A549 (cell line): ENCODE measurements at regions of chr11 and their contacts with region 1.

Region 1: DNA sequence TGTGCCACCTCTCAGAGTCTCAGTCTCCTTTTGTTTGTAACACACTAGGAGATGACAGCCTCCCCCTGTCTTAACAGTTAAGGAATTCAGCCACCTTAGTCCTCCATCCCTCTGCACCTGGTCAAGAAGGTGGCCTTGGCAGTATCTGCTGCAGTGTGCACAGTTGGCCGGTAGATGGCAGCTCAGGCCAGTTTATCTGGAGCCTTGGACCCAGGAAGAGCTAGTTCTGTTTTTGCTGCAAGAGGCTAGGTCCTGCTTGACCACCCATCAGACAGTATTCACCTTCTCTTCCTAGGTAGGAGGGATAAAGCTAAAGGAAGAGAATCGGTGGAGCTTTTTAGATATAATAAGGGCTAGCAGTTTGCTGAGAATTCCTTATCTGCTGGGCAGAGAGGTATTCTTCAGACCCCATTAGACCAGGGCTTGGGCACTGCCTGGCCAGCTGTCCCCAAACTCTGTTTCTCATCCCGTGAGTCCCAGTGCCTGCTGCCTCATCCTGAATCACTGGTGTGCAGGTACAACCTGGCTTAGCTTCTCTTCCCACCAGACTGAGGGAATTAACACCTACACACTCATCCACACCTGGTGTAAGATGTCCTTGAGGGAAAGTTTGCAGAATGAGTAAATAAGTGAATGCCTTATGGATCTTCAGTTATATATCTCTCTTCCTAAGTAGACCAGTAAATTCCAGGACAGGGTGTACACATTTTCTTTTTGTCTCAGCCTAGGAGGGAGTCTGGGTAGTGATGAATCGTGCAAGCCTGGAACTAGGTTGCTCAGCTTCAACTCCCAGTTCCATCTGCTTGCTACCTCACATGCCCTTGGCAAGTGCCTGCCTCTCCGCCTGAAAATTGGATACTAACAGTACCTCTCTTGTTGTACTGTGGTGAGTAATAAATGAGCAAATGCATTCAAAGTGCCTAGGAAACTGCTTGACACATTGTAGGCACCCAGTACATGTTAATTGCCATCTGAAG is 70.8 kb upstream of the NARS2 start:
- DNase-seq: peak; percentile 58 to 68
- ATAC-seq: peak; percentile 81 to 92
- H3K4me3 ChIP-seq: no peak overlapping the region
- H3K27ac ChIP-seq: no peak overlapping the region
- H3K4me1 ChIP-seq: 0 out of 3 replicates have a peak, but pooled peaks cover 3% of the 10 kb centered on the region
- CTCF ChIP-seq: peak; percentile 89
- EP300 ChIP-seq: no peak
- POLR2A ChIP-seq: no peak
- RAD21 ChIP-seq: peak; percentile 91

Region 2: GRCh38 chr11:78659326-78660270 is 14.1 kb after region 1 on chr11:
- CTCF ChIA-PET with region 1: interaction called, 35 read pairs
- POLR2A ChIA-PET with region 1: no interaction called
- DNase-seq: no peak
- ATAC-seq: no peak; a peak in 1 of 6 replicates
- H3K4me3 ChIP-seq: no peak overlapping the region
- H3K27ac ChIP-seq: no peak overlapping the region
- H3K4me1 ChIP-seq: no peaks in the 10 kb centered on the region
- CTCF ChIP-seq: no peak
- EP300 ChIP-seq: no peak
- POLR2A ChIP-seq: no peak
- RAD21 ChIP-seq: no peak

Region 3: DNA sequence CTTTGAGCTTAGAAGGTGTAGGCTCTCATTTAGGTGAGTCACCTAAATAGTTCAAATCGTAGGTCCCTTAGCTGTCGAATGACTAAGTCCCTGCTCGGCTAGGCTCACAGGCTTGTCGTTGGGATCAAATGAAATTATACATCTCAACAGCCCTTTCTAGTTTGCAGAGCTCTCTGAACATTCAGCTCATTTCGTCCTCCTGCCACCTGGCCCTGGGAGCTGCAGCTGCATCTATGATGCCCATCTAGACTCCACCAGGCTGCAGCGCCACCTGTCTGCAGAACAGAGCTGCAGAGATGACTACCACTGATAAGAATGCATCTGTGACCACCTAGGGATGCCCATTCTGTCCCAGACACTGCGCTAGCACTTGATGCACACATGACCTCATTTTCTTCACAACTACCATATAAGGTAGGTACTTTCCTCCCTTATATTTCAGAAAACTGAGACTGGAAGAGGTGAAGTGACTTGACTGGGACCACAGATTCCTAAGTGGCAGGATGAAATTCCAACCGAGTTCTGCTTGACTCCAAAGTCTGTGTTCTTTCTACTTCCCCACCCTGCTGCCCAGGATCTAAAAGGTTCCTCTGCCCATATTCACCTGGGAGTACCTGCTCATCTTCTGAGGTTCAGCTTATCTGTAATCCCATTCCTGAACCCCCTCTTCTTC is 70.3 kb after region 1 on chr11:
- CTCF ChIA-PET with region 1: interaction called, 48 read pairs
- POLR2A ChIA-PET with region 1: no interaction called
- DNase-seq: peak; percentile 52 to 65
- ATAC-seq: peak; percentile 92 to 99
- H3K4me3 ChIP-seq: no peak overlapping the region
- H3K27ac ChIP-seq: no peak overlapping the region
- H3K4me1 ChIP-seq: peaks cover 10% of the 10 kb centered on the region; the same call in 2 of the 3 replicates
- CTCF ChIP-seq: peak; percentile 68
- EP300 ChIP-seq: no peak
- POLR2A ChIP-seq: no peak
- RAD21 ChIP-seq: peak; percentile 41 to 57; a peak in 4 of 5 replicates

Region 4: DNA sequence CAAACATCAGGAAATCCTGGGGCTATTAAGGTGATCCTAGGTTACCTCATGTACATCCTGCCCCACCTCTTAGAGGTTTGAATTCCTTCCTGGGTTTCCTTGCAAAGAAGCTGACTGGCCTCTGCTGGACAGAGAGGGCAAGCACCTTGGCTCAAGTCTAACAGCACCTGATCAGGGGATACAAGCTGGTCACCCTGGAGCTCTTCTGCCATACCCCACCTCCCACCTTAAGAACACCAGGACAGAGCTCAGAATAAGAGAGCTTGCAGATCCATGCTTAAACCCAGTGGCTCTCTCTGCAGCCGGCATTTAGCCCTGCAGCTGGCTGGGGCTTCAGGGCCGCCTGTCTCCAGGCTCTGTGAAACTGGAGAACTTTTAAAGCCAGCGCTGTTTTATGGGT is 315.7 kb after region 1 on chr11:
- CTCF ChIA-PET with region 1: interaction called, 19 read pairs
- POLR2A ChIA-PET with region 1: no interaction called
- DNase-seq: peak in 1 of 2 experiments; percentile 44
- ATAC-seq: peak; percentile 77 to 87; a peak in 5 of 6 replicates
- H3K4me3 ChIP-seq: no peak overlapping the region
- H3K27ac ChIP-seq: no peak overlapping the region
- H3K4me1 ChIP-seq: no peaks in the 10 kb centered on the region
- CTCF ChIP-seq: peak; percentile 27; the same call in 1 of the 3 replicates
- EP300 ChIP-seq: no peak
- POLR2A ChIP-seq: no peak
- RAD21 ChIP-seq: peak in 1 of 2 experiments; percentile 49; a peak in 3 of 5 replicates

Region 5: DNA sequence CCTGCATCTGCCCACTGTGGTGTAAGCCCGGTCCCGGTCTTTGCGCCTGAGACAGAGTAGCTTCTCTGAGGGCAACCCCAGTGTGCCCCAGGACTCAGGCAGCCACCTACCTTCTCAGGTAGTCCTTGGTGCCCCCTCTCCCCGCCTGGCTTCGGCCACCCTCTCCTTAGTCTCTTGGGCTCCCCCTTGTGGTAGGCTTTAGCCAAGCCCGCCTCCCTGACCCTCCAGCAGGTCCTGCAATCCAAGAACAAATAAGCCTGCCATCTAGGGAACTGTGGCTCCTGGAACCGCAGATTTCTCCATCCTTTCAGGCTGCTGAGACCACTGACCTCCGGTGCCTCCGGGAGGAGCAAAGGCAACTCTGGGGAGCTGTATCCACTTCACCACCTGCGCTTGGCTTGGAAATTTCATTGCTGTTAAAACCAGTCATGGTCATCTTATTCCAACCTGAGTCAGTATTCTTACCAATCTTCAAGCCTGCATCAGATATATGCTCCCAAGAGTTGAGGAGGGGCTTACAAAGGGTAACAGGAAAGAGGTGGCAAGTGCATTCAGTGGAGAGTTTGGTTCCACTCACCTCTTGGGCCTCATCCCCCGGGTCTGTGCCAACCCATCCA is 848.1 kb after region 1 on chr11:
- CTCF ChIA-PET with region 1: interaction called, 23 read pairs
- POLR2A ChIA-PET with region 1: no interaction called
- DNase-seq: peak; percentile 68 to 70
- ATAC-seq: peak; percentile 91 to 99
- H3K4me3 ChIP-seq: no peak overlapping the region
- H3K27ac ChIP-seq: no peak overlapping the region
- H3K4me1 ChIP-seq: no peaks in the 10 kb centered on the region
- CTCF ChIP-seq: peak; percentile 74
- EP300 ChIP-seq: no peak
- POLR2A ChIP-seq: no peak
- RAD21 ChIP-seq: peak; percentile 70 to 71